ENCODE measurements at regions of chr6 and their contacts with region 1.

Region 1: DNA sequence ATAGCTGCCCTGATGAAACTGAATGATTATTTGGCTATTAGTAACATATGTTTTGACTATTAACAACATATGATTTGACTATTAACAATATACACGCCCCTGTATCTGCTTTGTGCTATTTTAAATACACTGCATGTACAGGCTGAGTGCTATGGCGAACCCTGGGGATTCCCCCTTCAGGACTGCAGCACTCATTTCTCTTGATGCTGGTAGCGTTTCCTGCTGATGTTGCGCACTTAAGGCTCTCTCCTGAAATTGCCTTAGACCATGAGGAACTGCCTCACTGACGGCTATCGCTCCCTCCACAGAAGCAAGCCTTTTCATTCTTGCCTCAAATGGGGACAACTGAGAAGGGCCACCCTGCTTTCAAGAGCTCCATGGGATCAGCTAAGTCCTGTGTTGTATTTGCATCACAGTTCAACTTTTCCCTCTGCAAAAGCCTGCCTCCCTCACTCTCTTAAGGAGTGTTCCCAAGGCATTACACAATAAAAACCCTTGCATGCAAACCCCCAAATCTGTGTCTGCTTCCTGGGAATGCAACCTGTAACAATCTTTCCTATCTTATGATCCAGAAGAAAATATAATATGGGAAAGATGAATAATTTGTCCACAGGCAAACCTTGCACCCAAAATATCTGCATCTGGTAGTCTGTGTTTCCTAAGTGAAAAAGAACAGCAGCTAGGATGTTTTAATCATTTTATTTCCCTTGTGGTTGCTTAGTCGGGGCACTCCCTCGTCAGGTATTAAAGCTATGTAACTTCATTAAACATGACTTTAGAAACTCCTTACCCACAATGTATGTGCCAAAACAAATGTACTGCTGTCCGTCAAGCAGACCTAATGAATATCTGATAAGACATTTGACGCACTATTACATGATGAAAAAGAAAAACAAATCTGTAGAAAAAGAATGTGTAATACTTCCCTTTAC is 456.4 kb downstream of the COL12A1 start:
- DNase-seq: peak; percentile 66
- ATAC-seq: peak; percentile 96
- H3K4me3 ChIP-seq: no peak overlapping the region
- H3K27ac ChIP-seq: peak overlapping the region; percentile 52
- H3K4me1 ChIP-seq: peaks cover 19% of the 10 kb centered on the region
- H3K27me3 ChIP-seq: no peaks in the 10 kb centered on the region
- CTCF ChIP-seq: no peak

Region 2: DNA sequence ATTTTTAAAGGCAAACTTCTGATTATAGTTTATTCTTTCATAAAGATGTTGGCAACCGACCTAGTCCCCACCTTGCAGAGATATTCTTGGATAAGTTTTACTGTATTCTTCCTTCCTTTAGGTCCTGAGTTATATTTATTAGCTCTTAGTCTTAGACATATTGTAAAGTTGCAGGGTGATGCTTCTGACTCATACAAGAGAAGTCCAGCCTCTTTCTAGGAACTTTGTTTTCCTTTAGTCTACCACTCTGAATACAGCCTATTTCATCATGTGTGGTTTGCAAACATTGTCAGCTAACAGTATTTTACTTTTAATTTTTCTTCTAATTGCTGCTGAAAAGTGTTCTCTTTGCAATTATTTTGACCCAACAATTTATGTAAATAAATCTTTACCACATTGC is 230.3 kb before region 1 on chr6:
- CTCF ChIA-PET with region 1: no interaction called
- POLR2A ChIA-PET with region 1: no interaction called
- intact Hi-C with region 1: loop called (anchors 10 kb)
- DNase-seq: peak; percentile 38
- ATAC-seq: peak; percentile 90
- H3K4me3 ChIP-seq: no peak overlapping the region
- H3K27ac ChIP-seq: no peak overlapping the region
- H3K4me1 ChIP-seq: no peaks in the 10 kb centered on the region
- H3K27me3 ChIP-seq: no peaks in the 10 kb centered on the region
- CTCF ChIP-seq: no peak

Region 3: DNA sequence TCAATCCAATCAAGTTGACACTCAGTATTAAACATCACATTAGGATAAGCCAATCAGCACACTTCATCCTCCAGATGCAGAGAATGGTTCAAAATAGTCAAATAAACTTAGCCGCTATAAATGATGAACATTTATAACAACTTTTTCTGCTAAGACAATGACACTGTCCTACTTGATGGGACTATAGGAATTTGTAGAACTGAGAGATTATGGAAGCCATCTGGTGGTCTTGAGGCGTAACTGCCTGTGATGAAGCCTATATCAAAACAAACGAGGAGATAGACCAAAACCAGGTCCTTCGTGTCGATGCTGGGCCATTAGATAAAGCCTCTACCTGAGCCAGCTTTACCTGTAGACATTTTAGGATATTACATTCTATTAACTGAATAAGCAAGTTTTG is 174.7 kb before region 1 on chr6:
- CTCF ChIA-PET with region 1: no interaction called
- POLR2A ChIA-PET with region 1: interaction called, 13 read pairs
- intact Hi-C with region 1: no loop called
- DNase-seq: peak; percentile 39
- ATAC-seq: peak; percentile 59
- H3K4me3 ChIP-seq: no peak overlapping the region
- H3K27ac ChIP-seq: no peak overlapping the region
- H3K4me1 ChIP-seq: no peaks in the 10 kb centered on the region
- H3K27me3 ChIP-seq: no peaks in the 10 kb centered on the region
- CTCF ChIP-seq: peak; percentile 60

Region 4: DNA sequence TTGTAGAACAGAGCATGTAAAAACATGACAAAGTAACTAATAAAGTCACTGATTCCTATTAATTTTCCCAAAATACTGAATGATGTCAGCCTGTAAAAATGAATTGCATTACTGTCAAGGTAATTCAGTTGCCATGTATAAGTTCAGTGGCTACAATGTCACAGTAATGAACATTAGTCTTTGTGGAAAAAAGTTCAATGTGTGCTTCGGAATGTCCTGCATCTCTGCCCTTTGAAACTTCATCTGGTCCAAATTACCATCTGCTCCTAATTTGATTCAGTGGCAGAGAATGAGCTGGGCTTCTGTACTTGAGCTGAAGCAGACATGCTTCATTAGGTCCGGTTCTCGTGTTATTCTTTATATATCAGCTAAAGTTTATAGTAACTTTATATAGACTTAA is 111.1 kb before region 1 on chr6:
- CTCF ChIA-PET with region 1: no interaction called
- POLR2A ChIA-PET with region 1: interaction called, 10 read pairs
- intact Hi-C with region 1: no loop called
- DNase-seq: no peak
- ATAC-seq: no peak
- H3K4me3 ChIP-seq: no peak overlapping the region
- H3K27ac ChIP-seq: no peak overlapping the region
- H3K4me1 ChIP-seq: no peaks in the 10 kb centered on the region
- H3K27me3 ChIP-seq: no peaks in the 10 kb centered on the region
- CTCF ChIP-seq: no peak

Region 5: DNA sequence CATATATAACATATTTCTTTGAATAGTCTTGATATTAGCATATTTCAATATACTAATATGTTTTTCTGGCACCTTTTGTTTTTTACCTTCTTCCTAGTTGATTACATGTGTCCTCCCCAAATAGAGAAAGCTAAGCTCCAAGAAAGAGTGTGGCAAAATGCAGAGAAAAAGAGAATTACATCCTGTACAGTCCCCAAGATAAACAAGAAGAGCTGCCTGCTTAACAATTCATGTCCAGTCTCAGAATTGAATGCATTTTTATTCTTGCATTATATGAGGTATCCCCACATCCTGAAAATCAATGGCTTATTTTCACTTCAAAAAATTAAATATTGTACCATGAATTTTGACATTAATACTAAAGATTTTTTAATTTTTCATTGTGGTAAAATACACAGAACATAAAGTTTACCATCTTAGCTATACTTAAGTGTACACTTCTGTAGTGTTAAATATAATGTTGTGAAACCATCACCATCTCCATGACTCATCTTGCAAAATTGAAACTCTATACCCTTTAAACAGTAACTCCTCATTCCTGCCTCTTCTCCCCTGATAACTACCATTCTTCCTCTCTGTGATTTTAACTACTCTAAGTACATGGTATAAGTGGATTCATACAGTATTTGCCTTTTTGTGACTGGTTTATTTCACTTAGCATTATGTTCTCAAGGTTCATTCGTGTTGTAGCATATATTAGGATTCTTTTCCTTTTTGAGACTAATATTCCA is 34.0 kb before region 1 on chr6:
- CTCF ChIA-PET with region 1: no interaction called
- POLR2A ChIA-PET with region 1: no interaction called
- intact Hi-C with region 1: no loop called
- DNase-seq: peak; percentile 72
- ATAC-seq: peak; percentile 91
- H3K4me3 ChIP-seq: no peak overlapping the region
- H3K27ac ChIP-seq: no peak overlapping the region
- H3K4me1 ChIP-seq: peaks cover 12% of the 10 kb centered on the region
- H3K27me3 ChIP-seq: no peaks in the 10 kb centered on the region
- CTCF ChIP-seq: no peak

Region 6: DNA sequence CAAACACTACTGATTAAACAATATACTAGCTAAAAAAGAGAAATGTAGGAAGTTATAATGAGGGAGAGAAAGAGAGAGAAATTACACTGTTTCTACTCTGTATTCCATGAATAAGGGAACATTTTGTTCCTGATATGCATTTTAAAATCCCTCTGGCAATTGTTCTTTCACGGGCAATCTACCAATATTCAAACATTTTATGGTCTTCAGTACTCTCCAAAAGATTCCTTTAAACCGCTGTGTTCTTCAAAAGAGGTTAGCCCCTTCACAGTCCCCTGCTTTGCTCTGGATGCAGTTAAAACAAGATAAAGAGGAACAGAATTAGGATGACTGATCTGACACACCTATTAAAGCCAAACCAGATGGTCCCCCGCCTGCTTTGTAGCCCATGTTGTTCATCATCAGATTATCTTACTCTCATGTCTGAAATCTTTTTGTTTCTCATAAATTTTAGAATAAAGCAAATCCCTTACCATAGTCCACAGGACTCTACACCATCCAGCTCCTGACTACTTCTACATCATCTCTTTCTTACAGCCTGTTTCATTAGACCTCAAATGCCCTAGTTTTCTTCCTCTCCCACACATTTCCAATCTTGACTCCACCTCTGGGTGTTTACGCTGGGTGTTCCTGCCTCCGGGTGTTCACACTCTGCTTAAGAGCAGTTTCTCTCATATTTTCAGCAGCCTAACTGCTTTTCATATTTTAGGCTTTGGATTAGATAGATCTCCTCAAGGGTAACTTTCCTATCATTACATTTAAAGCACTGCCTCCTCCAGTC is 56.6 kb after region 1 on chr6:
- CTCF ChIA-PET with region 1: no interaction called
- POLR2A ChIA-PET with region 1: no interaction called
- intact Hi-C with region 1: no loop called
- DNase-seq: no peak
- ATAC-seq: no peak
- H3K4me3 ChIP-seq: no peak overlapping the region
- H3K27ac ChIP-seq: no peak overlapping the region
- H3K4me1 ChIP-seq: no peaks in the 10 kb centered on the region
- H3K27me3 ChIP-seq: no peaks in the 10 kb centered on the region
- CTCF ChIP-seq: no peak